Activated naive CD4-positive, alpha-beta T cell treated with anti-CD3 and anti-CD28 coated beads for 36 hours (primary cell): ENCODE measurements at regions of chr2 and their contacts with region 1.

Region 1: GRCh38 chr2:231514103-231514950 is 15.9 kb downstream of the NMUR1 start:
- DNase-seq: peak; percentile 99
- H3K4me3 Mint-ChIP-seq: peak overlapping the region; percentile 95
- H3K27ac Mint-ChIP-seq: peak overlapping the region; percentile 92
- H3K4me1 Mint-ChIP-seq: peaks cover 13% of the 10 kb centered on the region
- H3K27me3 Mint-ChIP-seq: no peaks in the 10 kb centered on the region

Region 2: GRCh38 chr2:230913406-230914143 is 600.8 kb before region 1 on chr2:
- CTCF ChIA-PET with region 1: no interaction called
- intact Hi-C with region 1: no loop called
- DNase-seq: peak; percentile 58
- H3K4me3 Mint-ChIP-seq: no peak overlapping the region
- H3K27ac Mint-ChIP-seq: no peak overlapping the region
- H3K4me1 Mint-ChIP-seq: peaks cover 28% of the 10 kb centered on the region
- H3K27me3 Mint-ChIP-seq: peaks cover 1% of the 10 kb centered on the region

Region 3: GRCh38 chr2:231425811-231426728 is 88.3 kb before region 1 on chr2:
- CTCF ChIA-PET with region 1: no interaction called
- intact Hi-C with region 1: no loop called
- DNase-seq: peak; percentile 53
- H3K4me3 Mint-ChIP-seq: no peak overlapping the region
- H3K27ac Mint-ChIP-seq: no peak overlapping the region
- H3K4me1 Mint-ChIP-seq: peaks cover 14% of the 10 kb centered on the region
- H3K27me3 Mint-ChIP-seq: peaks cover under 1% of the 10 kb centered on the region

Region 4: GRCh38 chr2:231463698-231464575 is 50.4 kb before region 1 on chr2 and contains the start of gene NCL:
- CTCF ChIA-PET with region 1: interaction called, 4 read pairs
- intact Hi-C with region 1: loop called (anchors 1 kb)
- DNase-seq: peak; percentile 87
- H3K4me3 Mint-ChIP-seq: peak within 1 kb of the TSS; percentile 97
- H3K27ac Mint-ChIP-seq: peak within 1 kb of the TSS; percentile 98
- H3K4me1 Mint-ChIP-seq: peaks cover 46% of the 10 kb centered on the region
- H3K27me3 Mint-ChIP-seq: no peaks in the 10 kb centered on the region
- total RNA-seq, gene NCL: 908 to 911 TPM

Region 5: GRCh38 chr2:231530091-231531011 is 16.0 kb after region 1 on chr2 and contains the start of gene NMUR1:
- CTCF ChIA-PET with region 1: interaction called, 10 read pairs
- intact Hi-C with region 1: no loop called
- DNase-seq: peak; percentile 59
- H3K4me3 Mint-ChIP-seq: peak within 1 kb of the TSS; percentile 3
- H3K27ac Mint-ChIP-seq: no peak within 1 kb of the TSS
- H3K4me1 Mint-ChIP-seq: peaks cover 5% of the 10 kb centered on the region
- H3K27me3 Mint-ChIP-seq: peaks cover 15% of the 10 kb centered on the region
- total RNA-seq, gene NMUR1: not detected

Region 6: DNA sequence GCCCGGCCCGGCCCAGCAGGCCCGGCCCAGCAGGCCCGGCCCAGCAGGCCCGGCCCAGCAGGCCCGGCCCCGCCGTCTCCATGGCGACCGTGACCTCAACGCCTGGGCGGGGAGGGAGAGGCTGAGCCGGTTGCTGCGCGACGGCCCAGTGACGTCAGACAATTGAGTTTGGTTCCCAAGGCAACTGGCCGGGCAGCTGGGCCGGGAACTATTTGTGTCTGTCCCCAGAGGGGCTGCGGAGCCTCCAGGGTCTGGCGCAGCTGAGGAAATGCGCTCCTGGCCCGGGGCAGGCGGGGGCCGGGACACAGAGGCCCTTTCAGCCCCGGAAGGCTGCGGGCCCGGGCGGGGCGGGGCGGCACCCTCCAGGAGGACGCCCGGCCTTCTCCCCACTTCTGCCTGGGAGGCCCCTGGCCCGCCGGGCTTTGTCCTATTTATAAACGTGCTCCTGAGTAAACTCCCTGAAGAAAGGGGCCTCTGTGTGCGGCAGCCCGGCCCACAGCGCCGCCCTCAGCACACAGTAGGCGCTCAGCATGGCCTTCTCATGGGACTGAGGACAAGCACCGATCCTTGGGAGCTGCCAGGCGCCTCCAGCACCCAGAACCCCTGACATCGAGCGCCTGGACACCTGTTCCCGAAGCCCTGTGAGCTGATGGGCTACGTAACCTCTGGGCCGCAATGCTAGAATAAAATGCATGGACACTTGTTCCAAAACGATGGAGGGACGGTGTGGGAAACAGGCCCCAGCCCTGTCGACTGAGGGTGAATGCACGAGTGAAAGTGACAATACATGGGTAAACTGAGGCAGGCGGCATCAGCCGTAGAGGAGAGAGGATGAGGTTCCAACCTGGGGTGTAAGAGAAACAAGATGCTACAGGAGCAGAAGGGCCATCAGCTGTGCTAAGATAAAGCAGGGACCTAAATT is 90.6 kb after region 1 on chr2:
- CTCF ChIA-PET with region 1: interaction called, 27 read pairs
- intact Hi-C with region 1: loop called (anchors 1 kb)
- DNase-seq: peak; percentile 92
- H3K4me3 Mint-ChIP-seq: peak overlapping the region; percentile 53
- H3K27ac Mint-ChIP-seq: no peak overlapping the region
- H3K4me1 Mint-ChIP-seq: peaks cover 7% of the 10 kb centered on the region
- H3K27me3 Mint-ChIP-seq: no peaks in the 10 kb centered on the region

Region 7: DNA sequence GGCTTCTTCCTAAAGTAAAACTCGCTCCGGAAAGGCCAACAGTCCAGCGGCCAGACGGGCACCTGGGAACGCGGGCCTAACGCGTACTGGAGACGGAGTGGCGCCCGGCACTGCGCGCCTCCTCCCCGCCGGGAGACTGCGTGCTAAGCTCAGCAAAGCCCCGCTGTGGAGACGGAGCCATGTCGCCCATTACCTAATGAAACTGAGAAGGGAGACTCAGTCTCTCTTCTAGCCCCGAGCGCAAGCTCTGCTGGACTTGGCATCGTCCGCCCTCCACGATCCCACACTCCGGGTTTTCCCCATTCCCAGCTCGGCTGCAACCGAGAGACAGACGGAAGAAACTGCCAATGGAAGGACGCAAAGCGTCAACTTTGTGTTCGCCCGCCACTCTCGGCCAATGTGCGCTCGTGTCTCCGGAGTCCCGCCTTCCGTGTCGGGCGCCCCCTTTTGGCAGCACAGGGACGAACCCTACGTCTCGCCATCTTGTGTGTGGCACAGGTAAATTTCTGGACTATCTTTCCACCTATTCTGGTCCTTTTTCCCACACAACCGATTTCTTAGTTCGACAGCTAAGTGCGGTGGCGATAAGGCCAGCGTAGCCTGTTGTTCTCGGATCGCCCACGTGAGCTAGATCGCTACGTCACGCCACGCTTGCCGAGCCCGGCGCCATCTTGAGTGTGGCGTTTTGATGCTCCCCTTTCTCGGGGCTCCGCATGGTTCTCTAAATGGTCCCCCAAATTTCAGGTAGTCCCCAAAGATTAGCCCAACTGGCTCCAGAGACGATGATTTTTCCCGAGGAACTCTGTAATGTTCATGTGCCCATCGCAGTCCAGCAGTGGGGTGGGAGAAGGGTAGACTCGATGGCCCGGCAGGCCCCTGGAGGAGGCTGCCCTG is 192.7 kb after region 1 on chr2:
- CTCF ChIA-PET with region 1: interaction called, 4 read pairs
- intact Hi-C with region 1: loop called (anchors 1 kb)
- DNase-seq: peak; percentile 98
- H3K4me3 Mint-ChIP-seq: peak overlapping the region; percentile 91
- H3K27ac Mint-ChIP-seq: peak overlapping the region; percentile 100
- H3K4me1 Mint-ChIP-seq: peaks cover 18% of the 10 kb centered on the region
- H3K27me3 Mint-ChIP-seq: peaks cover 2% of the 10 kb centered on the region